ENCODE measurements at regions of chr5 and their contacts with region 1.

Region 1: GRCh38 chr5:14581333-14581890 is at the start of gene OTULINL:
- DNase-seq: peak; percentile 100
- H3K4me3 ChIP-seq: peak within 1 kb of the TSS; percentile 58 to 62
- H3K27ac ChIP-seq: peak within 1 kb of the TSS in 1 of 2 experiments; percentile 79; a peak in 2 of 4 replicates
- H3K4me1 ChIP-seq: peaks cover 0 to 16% of the 10 kb centered on the region in 2 experiments; a peak in 1 of 4 replicates
- H3K27me3 ChIP-seq: peaks cover 57% of the 10 kb centered on the region
- CTCF ChIP-seq: no peak
- EP300 ChIP-seq: no peak; a peak in 1 of 4 replicates
- RAD21 ChIP-seq: no peak
- polyA plus RNA-seq, gene OTULINL: 0.26 and 0.62 TPM in 2 replicates

Region 2: GRCh38 chr5:14463629-14464028 is 117.8 kb before region 1 on chr5:
- CTCF ChIA-PET with region 1: no interaction called
- POLR2A ChIA-PET with region 1: no interaction called
- DNase-seq: no peak
- H3K4me3 ChIP-seq: no peak overlapping the region
- H3K27ac ChIP-seq: peak overlapping the region; percentile 32 to 64; a peak in 3 of 4 replicates
- H3K4me1 ChIP-seq: peaks cover 18 to 22% of the 10 kb centered on the region in 2 experiments
- H3K27me3 ChIP-seq: no peaks in the 10 kb centered on the region
- CTCF ChIP-seq: no peak
- EP300 ChIP-seq: no peak
- RAD21 ChIP-seq: no peak

Region 3: GRCh38 chr5:14560091-14560595 is 21.3 kb before region 1 on chr5:
- CTCF ChIA-PET with region 1: no interaction called
- POLR2A ChIA-PET with region 1: no interaction called
- DNase-seq: no peak
- H3K4me3 ChIP-seq: no peak overlapping the region
- H3K27ac ChIP-seq: no peak overlapping the region
- H3K4me1 ChIP-seq: no peaks in the 10 kb centered on the region
- H3K27me3 ChIP-seq: no peaks in the 10 kb centered on the region; the same call in 1 of the 2 replicates
- CTCF ChIP-seq: no peak
- EP300 ChIP-seq: no peak
- RAD21 ChIP-seq: no peak

Region 4: GRCh38 chr5:14595189-14595588 is 13.8 kb after region 1 on chr5:
- CTCF ChIA-PET with region 1: interaction called, 15 read pairs
- POLR2A ChIA-PET with region 1: interaction called, 4 read pairs
- DNase-seq: peak; percentile 80
- H3K4me3 ChIP-seq: no peak overlapping the region
- H3K27ac ChIP-seq: peak overlapping the region in 1 of 2 experiments; percentile 98; a peak in 2 of 4 replicates
- H3K4me1 ChIP-seq: peaks cover 0 to 51% of the 10 kb centered on the region in 2 experiments; a peak in 2 of 4 replicates
- H3K27me3 ChIP-seq: no peaks in the 10 kb centered on the region; the same call in 1 of the 2 replicates
- CTCF ChIP-seq: no peak
- EP300 ChIP-seq: peak in 1 of 2 experiments; percentile 91; a peak in 2 of 4 replicates
- RAD21 ChIP-seq: no peak

Region 5: DNA sequence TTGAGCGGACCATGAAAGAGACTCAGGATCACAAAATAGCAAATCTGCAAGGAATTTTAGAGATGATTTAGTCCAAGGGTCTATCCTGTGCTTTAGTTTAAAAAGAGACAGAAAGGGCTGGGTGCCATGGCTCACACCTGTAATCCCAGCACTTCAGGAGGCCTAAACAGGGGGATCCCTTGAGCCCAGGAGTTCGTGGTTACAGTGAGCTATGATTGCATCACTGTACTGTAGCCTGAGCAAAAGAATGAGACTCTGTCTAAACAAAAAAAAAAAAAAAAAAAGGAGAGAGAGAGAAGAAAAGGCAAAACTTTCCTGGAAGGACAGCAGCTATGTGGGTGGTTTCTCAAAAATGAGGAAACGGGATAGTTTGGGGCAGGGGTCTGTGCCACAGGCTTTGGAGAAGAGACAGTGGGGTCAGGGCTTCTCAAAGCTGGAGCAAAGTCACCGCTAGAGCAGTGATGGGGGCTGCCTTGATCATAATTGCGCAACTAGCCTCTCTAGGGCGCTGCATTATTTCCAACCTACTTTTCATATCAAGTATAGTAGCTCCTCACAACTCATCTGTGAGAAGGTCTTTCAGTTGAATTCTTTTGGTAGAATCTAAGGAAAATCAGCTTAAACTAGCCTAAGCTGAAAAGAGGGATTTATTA is 298.7 kb after region 1 on chr5:
- CTCF ChIA-PET with region 1: no interaction called
- POLR2A ChIA-PET with region 1: no interaction called
- DNase-seq: no peak
- H3K4me3 ChIP-seq: no peak overlapping the region
- H3K27ac ChIP-seq: no peak overlapping the region
- H3K4me1 ChIP-seq: no peaks in the 10 kb centered on the region
- H3K27me3 ChIP-seq: no peaks in the 10 kb centered on the region
- CTCF ChIP-seq: no peak
- EP300 ChIP-seq: no peak
- RAD21 ChIP-seq: no peak

Region 6: DNA sequence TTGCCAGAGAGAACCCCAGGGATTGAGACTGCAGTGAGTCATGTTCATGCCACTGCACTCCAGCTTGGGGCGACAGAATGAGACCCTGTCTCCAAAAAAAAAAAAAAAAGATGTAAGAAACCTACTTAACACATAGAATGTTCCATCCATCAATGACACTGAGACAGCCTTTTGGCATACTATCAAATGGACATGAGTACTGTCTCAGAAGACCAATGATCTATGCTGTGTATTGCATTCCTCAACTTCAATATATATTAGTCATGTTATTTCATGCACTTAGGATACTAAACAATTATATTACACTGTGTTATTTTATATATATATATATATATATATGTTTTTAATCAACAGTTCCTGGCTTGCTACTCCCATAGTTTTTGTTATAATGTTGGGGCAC is 347.2 kb after region 1 on chr5:
- CTCF ChIA-PET with region 1: no interaction called
- POLR2A ChIA-PET with region 1: no interaction called
- DNase-seq: no peak
- H3K4me3 ChIP-seq: no peak overlapping the region
- H3K27ac ChIP-seq: no peak overlapping the region
- H3K4me1 ChIP-seq: peaks cover 0 to 15% of the 10 kb centered on the region in 2 experiments; a peak in 3 of 4 replicates
- H3K27me3 ChIP-seq: no peaks in the 10 kb centered on the region
- CTCF ChIP-seq: no peak
- EP300 ChIP-seq: no peak
- RAD21 ChIP-seq: no peak

Measured in SK-N-SH (cell line).